ENCODE measurements at regions of chr10 and their contacts with region 1.

Region 1: DNA sequence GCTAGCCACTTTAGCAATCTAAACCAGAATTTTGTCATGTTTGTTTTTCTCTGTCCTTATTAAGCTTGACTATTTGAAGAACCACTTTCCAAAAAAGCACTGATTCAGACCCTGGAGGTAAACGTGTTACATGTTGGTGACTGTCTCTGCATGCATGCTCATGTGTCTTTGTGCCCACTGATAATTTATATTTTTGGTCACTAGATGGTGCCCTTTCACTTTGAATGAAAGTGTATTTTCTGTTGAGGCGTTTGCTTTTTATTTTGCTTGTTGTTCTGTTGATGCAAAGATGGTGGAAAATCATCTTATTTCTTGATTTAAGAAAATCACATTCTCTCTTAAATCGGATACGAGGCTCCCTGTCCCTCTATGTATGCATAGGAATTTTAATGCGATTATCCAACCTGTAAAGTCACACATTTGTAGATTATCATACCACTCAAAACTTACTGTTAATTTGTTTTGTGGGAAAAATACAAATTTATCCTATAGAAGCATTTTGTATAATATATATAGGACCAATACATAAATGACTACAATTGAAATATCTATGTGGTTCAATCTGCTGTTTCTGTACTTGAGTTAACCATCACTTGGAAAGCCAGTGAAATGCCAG is 269.3 kb downstream of the BICC1 start:
- DNase-seq: peak; percentile 47
- H3K4me3 ChIP-seq: no peak overlapping the region
- H3K27ac ChIP-seq: no peak overlapping the region
- H3K4me1 ChIP-seq: peaks cover 3% of the 10 kb centered on the region
- H3K27me3 ChIP-seq: no peaks in the 10 kb centered on the region
- CTCF ChIP-seq: peak; percentile 49 to 50

Region 2: GRCh38 chr10:58952747-58953466 is 170.9 kb after region 1 on chr10:
- CTCF ChIA-PET with region 1: no interaction called
- dilution Hi-C with region 1: no loop called
- in situ Hi-C with region 1: loop called in 1 of 2 experiments (anchors 10 kb)
- intact Hi-C with region 1: loop called (anchors 1 kb)
- DNase-seq: peak; percentile 35
- H3K4me3 ChIP-seq: no peak overlapping the region
- H3K27ac ChIP-seq: no peak overlapping the region
- H3K4me1 ChIP-seq: peaks cover 21% of the 10 kb centered on the region
- H3K27me3 ChIP-seq: no peaks in the 10 kb centered on the region
- CTCF ChIP-seq: peak; percentile 84

Region 3: GRCh38 chr10:59181668-59182067 is 399.7 kb after region 1 on chr10:
- CTCF ChIA-PET with region 1: no interaction called
- dilution Hi-C with region 1: no loop called
- in situ Hi-C with region 1: loop called in 1 of 2 experiments (anchors 25 kb)
- intact Hi-C with region 1: loop called (anchors 1 kb)
- DNase-seq: peak; percentile 47
- H3K4me3 ChIP-seq: no peak overlapping the region
- H3K27ac ChIP-seq: no peak overlapping the region
- H3K4me1 ChIP-seq: peaks cover 8% of the 10 kb centered on the region
- H3K27me3 ChIP-seq: peaks cover 2% of the 10 kb centered on the region
- CTCF ChIP-seq: peak; percentile 58 to 72

Region 4: GRCh38 chr10:59222788-59223187 is 440.8 kb after region 1 on chr10:
- CTCF ChIA-PET with region 1: no interaction called
- dilution Hi-C with region 1: no loop called
- in situ Hi-C with region 1: loop called in 1 of 2 experiments (anchors 25 kb)
- intact Hi-C with region 1: no loop called
- DNase-seq: no peak
- H3K4me3 ChIP-seq: no peak overlapping the region
- H3K27ac ChIP-seq: no peak overlapping the region
- H3K4me1 ChIP-seq: no peaks in the 10 kb centered on the region
- H3K27me3 ChIP-seq: no peaks in the 10 kb centered on the region
- CTCF ChIP-seq: no peak

Region 5: GRCh38 chr10:59234816-59235429 is 452.9 kb after region 1 on chr10:
- CTCF ChIA-PET with region 1: no interaction called
- dilution Hi-C with region 1: no loop called
- in situ Hi-C with region 1: no loop called
- intact Hi-C with region 1: loop called (anchors 5 kb)
- DNase-seq: peak; percentile 12
- H3K4me3 ChIP-seq: no peak overlapping the region
- H3K27ac ChIP-seq: no peak overlapping the region
- H3K4me1 ChIP-seq: no peaks in the 10 kb centered on the region
- H3K27me3 ChIP-seq: no peaks in the 10 kb centered on the region
- CTCF ChIP-seq: peak; percentile 56 to 72

Region 6: DNA sequence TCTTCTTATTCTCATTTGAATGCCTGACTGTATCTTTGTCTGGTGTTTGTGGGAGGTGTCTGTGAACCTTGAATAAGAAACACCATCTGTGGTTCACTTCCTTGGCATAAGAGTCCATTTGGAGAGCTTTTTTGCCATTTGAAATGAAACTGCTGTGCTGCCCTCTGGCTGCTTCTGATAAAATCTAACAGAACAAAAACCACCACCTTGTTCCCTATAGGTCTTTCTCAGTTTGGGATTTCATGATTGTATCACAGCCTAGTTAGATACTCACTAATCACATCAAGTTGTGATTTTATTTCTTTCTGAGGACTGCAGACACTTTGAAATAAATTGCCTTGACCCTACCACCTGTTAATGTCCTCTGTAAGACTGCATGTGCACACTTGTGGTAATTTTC is 683.1 kb after region 1 on chr10:
- CTCF ChIA-PET with region 1: no interaction called
- dilution Hi-C with region 1: no loop called
- in situ Hi-C with region 1: no loop called
- intact Hi-C with region 1: loop called (anchors 10 kb)
- DNase-seq: peak; percentile 27
- H3K4me3 ChIP-seq: no peak overlapping the region
- H3K27ac ChIP-seq: no peak overlapping the region
- H3K4me1 ChIP-seq: no peaks in the 10 kb centered on the region
- H3K27me3 ChIP-seq: no peaks in the 10 kb centered on the region
- CTCF ChIP-seq: peak; percentile 18 to 62

Region 7: GRCh38 chr10:59580026-59580863 is 798.3 kb after region 1 on chr10:
- CTCF ChIA-PET with region 1: no interaction called
- dilution Hi-C with region 1: loop called (anchors 25 kb)
- in situ Hi-C with region 1: loop called in 1 of 2 experiments (anchors 25 kb)
- intact Hi-C with region 1: loop called (anchors 5 kb)
- DNase-seq: no peak
- H3K4me3 ChIP-seq: no peak overlapping the region
- H3K27ac ChIP-seq: no peak overlapping the region
- H3K4me1 ChIP-seq: peaks cover 4% of the 10 kb centered on the region
- H3K27me3 ChIP-seq: no peaks in the 10 kb centered on the region
- CTCF ChIP-seq: peak; percentile 43 to 62